Activated CD4-positive, alpha-beta T cell treated with anti-CD3 and anti-CD28 coated beads for 36 hours (primary cell): ENCODE measurements at regions of chr6 and their contacts with region 1.

Region 1: GRCh38 chr6:27893059-27893835 is 18.9 kb downstream of the OR2B2 start:
- DNase-seq: peak; percentile 94
- ATAC-seq: peak; percentile 64
- H3K4me3 Mint-ChIP-seq: no peak overlapping the region
- H3K27ac Mint-ChIP-seq: no peak overlapping the region
- H3K4me1 Mint-ChIP-seq: peaks cover 31% of the 10 kb centered on the region
- H3K27me3 Mint-ChIP-seq: no peaks in the 10 kb centered on the region

Region 2: DNA sequence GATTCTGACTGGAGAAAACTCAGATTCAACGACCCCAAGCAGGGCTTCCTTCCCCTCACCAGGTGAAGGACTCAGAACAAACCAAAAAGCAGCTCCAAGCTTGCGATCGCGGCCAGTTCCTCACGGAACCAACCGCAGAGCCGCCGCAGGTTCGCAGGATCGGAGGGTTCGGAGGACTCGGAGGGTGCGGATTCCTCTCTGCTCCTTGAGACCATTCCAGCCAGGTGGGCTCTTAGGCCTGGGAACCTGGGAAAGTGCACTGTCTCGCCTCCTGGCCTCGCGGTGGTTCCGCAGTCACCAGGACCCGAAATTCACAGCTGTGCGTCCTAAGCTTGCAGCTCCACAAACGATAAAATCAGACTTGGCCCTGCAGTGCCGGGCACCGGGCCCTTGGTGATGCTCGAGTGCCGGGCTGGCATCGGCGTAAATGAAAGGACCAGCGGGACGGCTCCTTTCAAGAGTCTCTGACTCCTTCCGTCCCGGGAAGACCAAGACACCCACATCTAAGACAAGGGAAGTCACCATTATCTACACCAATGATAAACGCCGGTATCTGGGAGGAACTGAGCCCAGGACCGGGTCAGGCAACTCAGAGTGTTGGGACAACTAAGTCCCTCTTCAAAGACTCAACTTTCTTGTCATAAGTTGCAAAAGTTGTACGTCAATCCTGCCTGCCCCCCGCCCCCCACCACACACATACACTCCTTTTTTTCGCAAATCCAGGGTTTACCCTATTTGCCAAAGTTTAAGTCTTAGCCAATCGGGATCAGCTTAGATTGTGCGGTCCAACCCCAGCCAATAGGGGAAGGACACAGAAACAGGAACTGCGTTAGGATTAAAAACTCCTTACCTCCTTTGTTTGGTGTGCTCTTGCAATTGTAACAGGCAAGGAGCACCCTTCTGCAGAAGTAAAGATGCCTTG is 715.5 kb before region 1 on chr6:
- CTCF ChIA-PET with region 1: no interaction called
- POLR2A ChIA-PET with region 1: interaction called, 4 read pairs
- intact Hi-C with region 1: loop called in 1 of 2 experiments (anchors 2 kb)
- DNase-seq: peak; percentile 86
- ATAC-seq: peak; percentile 89
- H3K4me3 Mint-ChIP-seq: peak overlapping the region; percentile 88
- H3K27ac Mint-ChIP-seq: peak overlapping the region; percentile 87
- H3K4me1 Mint-ChIP-seq: peaks cover 2% of the 10 kb centered on the region
- H3K27me3 Mint-ChIP-seq: no peaks in the 10 kb centered on the region

Region 3: GRCh38 chr6:27479319-27480182 is 413.7 kb before region 1 on chr6:
- CTCF ChIA-PET with region 1: no interaction called
- POLR2A ChIA-PET with region 1: interaction called, 13 read pairs
- intact Hi-C with region 1: loop called in 1 of 2 experiments (anchors 10 kb)
- DNase-seq: peak; percentile 89
- ATAC-seq: peak; percentile 69
- H3K4me3 Mint-ChIP-seq: no peak overlapping the region
- H3K27ac Mint-ChIP-seq: no peak overlapping the region
- H3K4me1 Mint-ChIP-seq: peaks cover 6% of the 10 kb centered on the region
- H3K27me3 Mint-ChIP-seq: no peaks in the 10 kb centered on the region

Region 4: GRCh38 chr6:27608916-27609883 is 284.0 kb before region 1 on chr6:
- CTCF ChIA-PET with region 1: no interaction called
- POLR2A ChIA-PET with region 1: no interaction called
- intact Hi-C with region 1: no loop called
- DNase-seq: no peak
- ATAC-seq: no peak
- H3K4me3 Mint-ChIP-seq: no peak overlapping the region
- H3K27ac Mint-ChIP-seq: no peak overlapping the region
- H3K4me1 Mint-ChIP-seq: peaks cover 13% of the 10 kb centered on the region
- H3K27me3 Mint-ChIP-seq: peaks cover 46% of the 10 kb centered on the region

Region 5: GRCh38 chr6:27795697-27796494 is 97.4 kb before region 1 on chr6:
- CTCF ChIA-PET with region 1: interaction called, 42 read pairs
- POLR2A ChIA-PET with region 1: interaction called, 5 read pairs
- intact Hi-C with region 1: loop called in 1 of 2 experiments (anchors 1 kb)
- DNase-seq: peak; percentile 59
- ATAC-seq: peak; percentile 55
- H3K4me3 Mint-ChIP-seq: no peak overlapping the region
- H3K27ac Mint-ChIP-seq: peak overlapping the region; percentile 13
- H3K4me1 Mint-ChIP-seq: peaks cover 26% of the 10 kb centered on the region
- H3K27me3 Mint-ChIP-seq: peaks cover 6% of the 10 kb centered on the region

Region 6: GRCh38 chr6:27838058-27838944 is 54.9 kb before region 1 on chr6:
- CTCF ChIA-PET with region 1: interaction called, 17 read pairs
- POLR2A ChIA-PET with region 1: interaction called, 182 read pairs
- intact Hi-C with region 1: loop called (anchors 1 kb)
- DNase-seq: peak; percentile 89
- ATAC-seq: peak; percentile 74
- H3K4me3 Mint-ChIP-seq: no peak overlapping the region
- H3K27ac Mint-ChIP-seq: no peak overlapping the region
- H3K4me1 Mint-ChIP-seq: peaks cover 23% of the 10 kb centered on the region
- H3K27me3 Mint-ChIP-seq: peaks cover 9% of the 10 kb centered on the region

Region 7: GRCh38 chr6:28863604-28864320 is 970.5 kb after region 1 on chr6:
- CTCF ChIA-PET with region 1: no interaction called
- POLR2A ChIA-PET with region 1: interaction called, 13 read pairs
- intact Hi-C with region 1: loop called (anchors 2 to 10 kb)
- DNase-seq: peak; percentile 88
- ATAC-seq: peak; percentile 45
- H3K4me3 Mint-ChIP-seq: peak overlapping the region; percentile 74
- H3K27ac Mint-ChIP-seq: peak overlapping the region; percentile 78
- H3K4me1 Mint-ChIP-seq: peaks cover 36% of the 10 kb centered on the region
- H3K27me3 Mint-ChIP-seq: peaks cover 1% of the 10 kb centered on the region